ENCODE measurements at regions of chr6 and their contacts with region 1.

Region 1: DNA sequence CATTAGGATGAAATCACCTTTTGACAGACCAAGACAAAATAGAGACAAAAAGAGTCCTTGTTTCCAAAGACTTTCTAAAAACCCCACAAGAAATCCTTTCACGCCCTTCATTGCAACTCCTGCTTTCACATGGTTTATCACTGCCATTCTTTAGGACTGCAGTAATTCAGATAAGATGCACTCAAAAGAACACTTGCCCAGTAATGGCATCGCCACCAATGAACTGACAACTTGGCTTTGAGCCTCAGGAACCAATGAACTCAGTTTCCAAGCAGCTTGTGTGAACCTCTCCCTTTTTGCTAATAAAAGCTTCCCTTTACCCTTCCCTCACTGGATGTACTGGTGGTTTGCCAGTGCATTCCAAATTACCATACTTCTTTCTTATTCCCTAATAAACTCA is 21.8 kb downstream of the OSTM1 start:
- DNase-seq: no peak
- ATAC-seq: no peak
- H3K4me3 ChIP-seq: no peak overlapping the region
- H3K27ac ChIP-seq: no peak overlapping the region
- H3K4me1 ChIP-seq: no peaks in the 10 kb centered on the region
- H3K27me3 ChIP-seq: no peaks in the 10 kb centered on the region
- CTCF ChIP-seq: no peak
- EP300 ChIP-seq: no peak
- POLR2A ChIP-seq: no peak
- RAD21 ChIP-seq: no peak

Region 2: GRCh38 chr6:107443608-107444267 is 609.0 kb before region 1 on chr6:
- CTCF ChIA-PET with region 1: no interaction called
- POLR2A ChIA-PET with region 1: no interaction called
- RAD21 ChIA-PET with region 1: no interaction called
- SMC1A ChIA-PET with region 1: no interaction called
- in situ Hi-C with region 1: no loop called
- intact Hi-C with region 1: loop called (anchors 10 kb)
- DNase-seq: no peak
- ATAC-seq: no peak
- H3K4me3 ChIP-seq: no peak overlapping the region
- H3K27ac ChIP-seq: no peak overlapping the region
- H3K4me1 ChIP-seq: no peaks in the 10 kb centered on the region
- H3K27me3 ChIP-seq: no peaks in the 10 kb centered on the region
- CTCF ChIP-seq: no peak
- EP300 ChIP-seq: no peak
- POLR2A ChIP-seq: no peak
- RAD21 ChIP-seq: no peak

Region 3: GRCh38 chr6:107866606-107867301 is 186.0 kb before region 1 on chr6:
- CTCF ChIA-PET with region 1: interaction called, 7 read pairs
- POLR2A ChIA-PET with region 1: interaction called, 4 read pairs
- RAD21 ChIA-PET with region 1: interaction called, 4 read pairs
- SMC1A ChIA-PET with region 1: interaction called, 6 read pairs
- in situ Hi-C with region 1: no loop called
- intact Hi-C with region 1: loop called (anchors 10 kb)
- DNase-seq: no peak
- ATAC-seq: peak; percentile 74
- H3K4me3 ChIP-seq: no peak overlapping the region
- H3K27ac ChIP-seq: no peak overlapping the region
- H3K4me1 ChIP-seq: 0 out of 2 replicates have a peak, but pooled peaks cover 5% of the 10 kb centered on the region
- H3K27me3 ChIP-seq: no peaks in the 10 kb centered on the region
- CTCF ChIP-seq: peak; percentile 35 to 68 (median 35); a peak in 5 of 6 replicates
- EP300 ChIP-seq: no peak
- POLR2A ChIP-seq: no peak
- RAD21 ChIP-seq: peak; percentile 31; the same call in 1 of the 2 replicates

Region 4: GRCh38 chr6:107977283-107977682 is 75.4 kb before region 1 on chr6:
- CTCF ChIA-PET with region 1: interaction called, 90 read pairs
- POLR2A ChIA-PET with region 1: interaction called, 3 read pairs
- RAD21 ChIA-PET with region 1: interaction called, 7 read pairs
- SMC1A ChIA-PET with region 1: interaction called, 17 read pairs
- in situ Hi-C with region 1: no loop called
- intact Hi-C with region 1: loop called (anchors 2 kb)
- DNase-seq: no peak
- ATAC-seq: no peak
- H3K4me3 ChIP-seq: no peak overlapping the region
- H3K27ac ChIP-seq: no peak overlapping the region
- H3K4me1 ChIP-seq: no peaks in the 10 kb centered on the region
- H3K27me3 ChIP-seq: no peaks in the 10 kb centered on the region; a peak in 1 of 4 replicates
- CTCF ChIP-seq: peak in 1 of 3 experiments; percentile 38; a peak in 2 of 6 replicates
- EP300 ChIP-seq: no peak
- POLR2A ChIP-seq: no peak
- RAD21 ChIP-seq: peak; percentile 35

Region 5: GRCh38 chr6:107982486-107982885 is 70.2 kb before region 1 on chr6:
- CTCF ChIA-PET with region 1: interaction called, 90 read pairs
- POLR2A ChIA-PET with region 1: interaction called, 3 read pairs
- RAD21 ChIA-PET with region 1: interaction called, 7 read pairs
- SMC1A ChIA-PET with region 1: interaction called, 17 read pairs
- in situ Hi-C with region 1: no loop called
- intact Hi-C with region 1: loop called (anchors 2 kb)
- DNase-seq: no peak
- ATAC-seq: no peak
- H3K4me3 ChIP-seq: no peak overlapping the region
- H3K27ac ChIP-seq: no peak overlapping the region
- H3K4me1 ChIP-seq: no peaks in the 10 kb centered on the region
- H3K27me3 ChIP-seq: no peaks in the 10 kb centered on the region; a peak in 2 of 4 replicates
- CTCF ChIP-seq: no peak
- EP300 ChIP-seq: no peak
- POLR2A ChIP-seq: no peak
- RAD21 ChIP-seq: no peak

Region 6: GRCh38 chr6:108031968-108032367 is 20.7 kb before region 1 on chr6:
- CTCF ChIA-PET with region 1: interaction called, 10 read pairs
- POLR2A ChIA-PET with region 1: no interaction called
- RAD21 ChIA-PET with region 1: no interaction called
- SMC1A ChIA-PET with region 1: interaction called, 4 read pairs
- in situ Hi-C with region 1: no loop called
- intact Hi-C with region 1: no loop called
- DNase-seq: no peak
- ATAC-seq: no peak
- H3K4me3 ChIP-seq: no peak overlapping the region
- H3K27ac ChIP-seq: no peak overlapping the region
- H3K4me1 ChIP-seq: no peaks in the 10 kb centered on the region
- H3K27me3 ChIP-seq: no peaks in the 10 kb centered on the region
- CTCF ChIP-seq: no peak
- EP300 ChIP-seq: no peak
- POLR2A ChIP-seq: no peak
- RAD21 ChIP-seq: no peak

Region 7: DNA sequence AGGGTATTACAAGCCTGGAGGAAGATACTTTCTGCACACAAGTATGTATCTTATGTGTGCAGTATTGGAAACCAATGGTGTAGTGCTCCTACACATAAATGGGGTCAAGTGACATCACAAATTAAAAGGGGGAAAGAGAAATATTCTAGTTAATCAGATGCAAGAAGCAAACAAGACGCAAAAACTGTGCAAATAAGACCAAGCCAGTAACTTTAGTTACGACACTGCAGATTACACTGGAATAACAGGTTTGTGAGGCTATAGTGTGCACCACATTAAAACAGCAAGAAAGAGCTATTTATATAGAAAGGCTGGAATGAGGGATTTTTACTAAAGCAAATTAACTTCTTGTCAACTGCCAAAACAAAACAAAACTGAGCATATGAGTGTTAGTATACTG is 158.9 kb after region 1 on chr6:
- CTCF ChIA-PET with region 1: no interaction called
- POLR2A ChIA-PET with region 1: no interaction called
- RAD21 ChIA-PET with region 1: no interaction called
- SMC1A ChIA-PET with region 1: no interaction called
- in situ Hi-C with region 1: no loop called
- intact Hi-C with region 1: no loop called
- DNase-seq: no peak
- ATAC-seq: no peak
- H3K4me3 ChIP-seq: no peak overlapping the region
- H3K27ac ChIP-seq: no peak overlapping the region
- H3K4me1 ChIP-seq: no peaks in the 10 kb centered on the region
- H3K27me3 ChIP-seq: no peaks in the 10 kb centered on the region
- CTCF ChIP-seq: no peak
- EP300 ChIP-seq: no peak
- POLR2A ChIP-seq: no peak
- RAD21 ChIP-seq: no peak

Region 8: DNA sequence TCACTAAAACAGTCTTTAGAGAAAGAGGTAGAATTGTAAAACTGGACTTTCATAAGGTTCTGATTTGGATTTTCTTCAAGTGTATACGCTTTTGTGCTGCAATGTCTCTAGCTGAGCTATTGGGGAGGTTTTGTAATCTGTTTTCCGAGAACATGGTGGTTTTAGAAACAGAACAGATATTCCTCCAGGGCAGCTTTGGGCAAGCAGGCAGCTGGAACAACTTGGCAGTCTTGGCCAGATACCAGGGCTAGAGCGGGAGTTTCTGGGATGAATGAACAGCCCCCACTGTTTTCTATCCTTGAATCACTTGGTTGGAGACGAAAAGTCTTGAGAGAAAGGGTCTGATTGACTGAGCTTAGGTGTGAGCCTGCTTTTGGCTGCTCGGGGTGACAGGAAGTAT is 778.4 kb after region 1 on chr6:
- CTCF ChIA-PET with region 1: no interaction called
- POLR2A ChIA-PET with region 1: no interaction called
- RAD21 ChIA-PET with region 1: no interaction called
- SMC1A ChIA-PET with region 1: no interaction called
- in situ Hi-C with region 1: no loop called
- intact Hi-C with region 1: no loop called
- DNase-seq: no peak
- ATAC-seq: no peak
- H3K4me3 ChIP-seq: no peak overlapping the region
- H3K27ac ChIP-seq: no peak overlapping the region
- H3K4me1 ChIP-seq: no peaks in the 10 kb centered on the region
- H3K27me3 ChIP-seq: no peaks in the 10 kb centered on the region; a peak in 2 of 4 replicates
- CTCF ChIP-seq: no peak
- EP300 ChIP-seq: no peak
- POLR2A ChIP-seq: no peak
- RAD21 ChIP-seq: no peak